ENCODE measurements at regions of chr7 and their contacts with region 1.

Region 1: GRCh38 chr7:43582503-43583423 is at the start of gene STK17A:
- DNase-seq: peak; percentile 97
- ATAC-seq: peak; percentile 73 to 95 (median 79)
- H3K4me3 ChIP-seq: peak within 1 kb of the TSS; percentile 74
- H3K4me3 Mint-ChIP-seq: peak within 1 kb of the TSS; percentile 100
- H3K27ac ChIP-seq: peak within 1 kb of the TSS; percentile 99
- H3K27ac Mint-ChIP-seq: peak within 1 kb of the TSS; percentile 83 to 99
- H3K4me1 ChIP-seq: peaks cover 9% of the 10 kb centered on the region
- H3K4me1 Mint-ChIP-seq: peaks cover 39 to 49% of the 10 kb centered on the region in 2 donors
- H3K27me3 ChIP-seq: peaks cover 2% of the 10 kb centered on the region
- H3K27me3 Mint-ChIP-seq: peaks cover 14 to 25% of the 10 kb centered on the region in 2 donors
- CTCF ChIP-seq: peak; percentile 95
- total RNA-seq, gene STK17A: 92.9 to 135 (median 111) TPM

Region 2: DNA sequence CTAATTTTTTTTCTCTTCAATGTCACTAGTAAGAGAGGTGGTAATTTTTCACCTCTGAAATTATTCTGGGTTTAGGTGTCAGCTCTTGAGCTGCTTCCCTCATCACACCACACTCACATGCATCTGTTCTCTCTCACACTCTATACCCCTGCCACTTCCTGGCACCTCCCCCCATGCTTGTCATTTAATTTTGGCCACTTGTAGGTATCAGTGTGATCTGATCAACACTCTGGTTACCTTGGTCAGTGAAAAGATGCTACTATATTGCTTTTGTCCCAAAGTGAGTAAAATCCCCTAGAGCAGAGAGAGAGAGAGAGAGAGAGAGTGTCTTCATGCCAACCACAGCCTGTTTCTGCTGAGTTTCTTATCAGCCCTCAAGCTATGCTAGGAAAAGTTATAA is 42.7 kb after region 1 on chr7:
- intact Hi-C with region 1: loop called (anchors 1 kb)
- DNase-seq: peak; percentile 76 to 86
- ATAC-seq: peak; percentile 82 to 97 (median 93)
- H3K4me3 ChIP-seq: no peak overlapping the region
- H3K4me3 Mint-ChIP-seq: peak overlapping the region; percentile 86
- H3K27ac ChIP-seq: peak overlapping the region; percentile 80
- H3K27ac Mint-ChIP-seq: no peak overlapping the region
- H3K4me1 ChIP-seq: peaks cover 37% of the 10 kb centered on the region
- H3K4me1 Mint-ChIP-seq: peaks cover 79 to 80% of the 10 kb centered on the region in 2 donors
- H3K27me3 ChIP-seq: no peaks in the 10 kb centered on the region
- H3K27me3 Mint-ChIP-seq: no peaks in the 10 kb centered on the region
- CTCF ChIP-seq: no peak

Region 3: GRCh38 chr7:43647673-43648472 is 65.1 kb after region 1 on chr7:
- intact Hi-C with region 1: loop called (anchors 1 kb)
- DNase-seq: peak in 1 of 2 donors; percentile 66
- ATAC-seq: peak in 1 of 3 donors; percentile 8
- H3K4me3 ChIP-seq: peak overlapping the region; percentile 4
- H3K4me3 Mint-ChIP-seq: peak overlapping the region; percentile 80
- H3K27ac ChIP-seq: peak overlapping the region; percentile 97
- H3K27ac Mint-ChIP-seq: peak overlapping the region; percentile 90 to 99
- H3K4me1 ChIP-seq: peaks cover 95% of the 10 kb centered on the region
- H3K4me1 Mint-ChIP-seq: peaks cover 93 to 97% of the 10 kb centered on the region in 2 donors
- H3K27me3 ChIP-seq: no peaks in the 10 kb centered on the region
- H3K27me3 Mint-ChIP-seq: no peaks in the 10 kb centered on the region
- CTCF ChIP-seq: no peak

Region 4: DNA sequence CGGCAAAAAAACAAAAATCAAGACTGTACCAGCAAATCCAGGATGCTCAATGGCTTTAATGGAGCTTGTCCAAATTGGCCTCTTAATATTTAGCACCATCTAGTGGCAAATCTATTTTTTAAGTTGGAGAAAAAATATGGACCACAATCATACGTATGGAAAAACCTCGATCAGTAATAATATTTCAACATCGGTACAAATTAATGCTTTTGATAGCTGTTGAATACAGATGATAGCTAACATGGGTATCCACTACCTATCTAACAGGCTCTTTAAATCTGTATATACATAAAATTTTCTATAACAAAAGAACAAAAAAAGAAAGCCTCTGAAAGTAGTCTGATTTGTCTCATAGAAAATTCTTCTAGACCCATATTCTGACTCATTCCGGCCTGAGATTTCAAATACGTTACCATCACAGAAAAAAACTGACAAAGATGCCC is 117.3 kb after region 1 on chr7:
- intact Hi-C with region 1: loop called (anchors 1 kb)
- DNase-seq: peak in 1 of 2 donors; percentile 80
- ATAC-seq: peak; percentile 70 to 94 (median 84)
- H3K4me3 ChIP-seq: no peak overlapping the region
- H3K4me3 Mint-ChIP-seq: peak overlapping the region; percentile 32
- H3K27ac ChIP-seq: no peak overlapping the region
- H3K27ac Mint-ChIP-seq: peak overlapping the region; percentile 54 to 63
- H3K4me1 ChIP-seq: no peaks in the 10 kb centered on the region
- H3K4me1 Mint-ChIP-seq: peaks cover 29 to 31% of the 10 kb centered on the region in 2 donors
- H3K27me3 ChIP-seq: no peaks in the 10 kb centered on the region
- H3K27me3 Mint-ChIP-seq: no peaks in the 10 kb centered on the region
- CTCF ChIP-seq: peak; percentile 79

Region 5: GRCh38 chr7:43721193-43721806 is 138.5 kb after region 1 on chr7:
- intact Hi-C with region 1: loop called (anchors 1 kb)
- DNase-seq: peak in 1 of 2 donors; percentile 81
- ATAC-seq: peak; percentile 50 to 71 (median 52)
- H3K4me3 ChIP-seq: no peak overlapping the region
- H3K4me3 Mint-ChIP-seq: no peak overlapping the region
- H3K27ac ChIP-seq: no peak overlapping the region
- H3K27ac Mint-ChIP-seq: no peak overlapping the region
- H3K4me1 ChIP-seq: peaks cover 4% of the 10 kb centered on the region
- H3K4me1 Mint-ChIP-seq: peaks cover 33 to 39% of the 10 kb centered on the region in 2 donors
- H3K27me3 ChIP-seq: no peaks in the 10 kb centered on the region
- H3K27me3 Mint-ChIP-seq: no peaks in the 10 kb centered on the region
- CTCF ChIP-seq: peak; percentile 96

Region 6: GRCh38 chr7:43834463-43835251 is 251.9 kb after region 1 on chr7:
- intact Hi-C with region 1: loop called (anchors 1 kb)
- DNase-seq: peak; percentile 29 to 80
- ATAC-seq: peak; percentile 67 to 75 (median 70)
- H3K4me3 ChIP-seq: peak overlapping the region; percentile 56
- H3K4me3 Mint-ChIP-seq: peak overlapping the region; percentile 84
- H3K27ac ChIP-seq: peak overlapping the region; percentile 81
- H3K27ac Mint-ChIP-seq: peak overlapping the region; percentile 83 to 91
- H3K4me1 ChIP-seq: peaks cover 18% of the 10 kb centered on the region
- H3K4me1 Mint-ChIP-seq: peaks cover 16 to 19% of the 10 kb centered on the region in 2 donors
- H3K27me3 ChIP-seq: no peaks in the 10 kb centered on the region
- H3K27me3 Mint-ChIP-seq: no peaks in the 10 kb centered on the region
- CTCF ChIP-seq: no peak

Region 7: DNA sequence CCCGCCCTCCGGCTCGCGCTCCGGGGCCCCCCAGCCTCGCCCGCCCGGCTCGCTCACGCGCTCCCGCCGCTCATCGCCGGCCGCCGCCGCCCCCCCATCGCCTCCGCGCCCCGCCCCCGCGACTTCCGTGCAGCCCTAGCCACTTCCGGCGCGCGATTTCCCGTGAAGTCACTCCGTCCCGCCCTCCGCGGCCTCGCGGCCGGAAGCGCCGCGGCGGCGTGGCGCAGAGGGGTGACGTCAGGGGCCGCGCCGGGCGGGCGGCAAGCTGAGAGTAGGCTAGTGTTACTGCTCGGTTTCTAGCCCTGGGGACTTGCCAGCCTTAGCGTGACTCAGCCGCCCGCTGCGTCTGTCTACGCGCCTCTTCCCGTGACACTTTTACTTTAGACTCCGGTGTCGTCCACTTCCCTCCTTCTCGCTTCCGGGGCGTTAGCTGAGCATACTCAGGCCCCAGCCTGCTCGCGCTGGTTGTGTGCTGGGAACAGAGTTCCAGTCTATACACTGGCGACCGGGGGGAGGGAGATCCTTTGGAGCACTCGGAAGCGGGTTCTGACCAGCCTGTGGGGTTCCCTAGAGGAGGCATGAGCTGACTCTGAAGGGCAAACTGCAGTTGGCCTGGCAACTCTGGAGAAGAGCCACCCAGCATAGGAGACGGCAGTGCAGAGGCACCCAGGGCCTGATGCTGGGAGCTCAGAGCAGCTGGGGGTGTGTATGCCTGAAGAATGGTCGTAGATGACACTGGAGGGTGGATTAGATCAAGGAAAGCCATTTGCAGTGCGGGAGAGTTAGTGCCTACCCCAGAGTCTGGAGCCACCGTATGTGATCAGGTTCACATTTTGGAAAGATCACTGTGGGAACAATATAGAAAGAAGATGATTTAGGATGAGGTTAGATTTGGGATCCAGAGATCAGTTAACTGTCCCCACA is 1302.9 kb after region 1 on chr7 and contains the start of gene PURB:
- intact Hi-C with region 1: loop called (anchors 10 kb)
- DNase-seq: peak; percentile 98 to 99
- ATAC-seq: peak; percentile 83 to 94 (median 86)
- H3K4me3 ChIP-seq: peak within 1 kb of the TSS; percentile 75
- H3K4me3 Mint-ChIP-seq: peak within 1 kb of the TSS; percentile 99
- H3K27ac ChIP-seq: peak within 1 kb of the TSS; percentile 97
- H3K27ac Mint-ChIP-seq: peak within 1 kb of the TSS; percentile 100
- H3K4me1 ChIP-seq: peaks cover 35% of the 10 kb centered on the region
- H3K4me1 Mint-ChIP-seq: peaks cover 34 to 45% of the 10 kb centered on the region in 2 donors
- H3K27me3 ChIP-seq: no peaks in the 10 kb centered on the region
- H3K27me3 Mint-ChIP-seq: no peaks in the 10 kb centered on the region
- CTCF ChIP-seq: no peak
- total RNA-seq, gene PURB: 28.5 to 36.0 (median 33.7) TPM

Measured in natural killer cell (primary cell).